SK-N-SH (cell line): ENCODE measurements at regions of chr18 and their contacts with region 1.

Region 1: GRCh38 chr18:58781627-58782194 is 83.0 kb upstream of the ZNF532 start:
- DNase-seq: peak; percentile 70
- H3K4me3 ChIP-seq: peak overlapping the region in 1 of 2 experiments; percentile 27; a peak in 1 of 4 replicates
- H3K27ac ChIP-seq: no peak overlapping the region
- H3K4me1 ChIP-seq: peaks cover 2 to 14% of the 10 kb centered on the region in 2 experiments; a peak in 2 of 4 replicates
- H3K27me3 ChIP-seq: no peaks in the 10 kb centered on the region
- CTCF ChIP-seq: peak; percentile 96
- EP300 ChIP-seq: no peak
- RAD21 ChIP-seq: peak; percentile 96

Region 2: DNA sequence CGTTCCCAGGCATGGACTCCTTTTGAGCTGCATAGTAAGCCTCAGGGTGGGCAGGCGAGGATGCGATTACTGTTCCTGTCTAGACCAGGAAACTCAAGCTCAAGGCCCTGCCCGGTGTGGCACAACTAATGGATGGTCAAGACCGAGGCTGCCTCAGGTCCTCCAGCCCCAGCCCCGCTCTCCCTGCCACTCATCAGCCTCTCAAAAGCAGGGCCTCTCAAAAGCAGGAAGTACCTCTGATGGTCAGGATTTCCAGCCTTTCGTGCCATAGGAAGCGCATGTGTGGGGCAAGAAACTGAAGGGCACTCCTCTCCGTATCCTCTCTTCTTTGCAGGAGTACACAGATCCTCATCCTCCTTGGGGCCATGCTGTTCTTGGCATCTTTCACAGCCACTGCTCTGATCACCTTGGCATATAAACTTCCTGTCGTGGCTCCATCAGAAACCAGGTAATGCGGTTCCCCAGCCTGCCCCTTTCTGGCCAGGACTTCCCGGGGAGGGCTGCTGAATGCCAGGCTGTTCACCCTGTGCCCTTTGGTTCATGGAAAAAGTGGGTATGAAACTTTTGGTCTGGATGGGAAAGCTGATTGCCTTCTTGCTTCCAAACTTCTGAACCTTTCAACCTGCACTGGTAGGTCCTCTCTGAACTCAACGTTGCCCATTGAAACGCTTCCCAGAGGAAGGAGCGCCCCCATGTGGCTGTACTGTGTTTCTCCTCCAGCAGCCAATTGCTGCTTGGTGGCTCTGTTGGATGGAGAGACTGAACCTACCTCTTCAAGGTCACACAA is 275.2 kb after region 1 on chr18:
- CTCF ChIA-PET with region 1: interaction called, 68 read pairs
- POLR2A ChIA-PET with region 1: no interaction called
- DNase-seq: peak; percentile 54
- H3K4me3 ChIP-seq: no peak overlapping the region
- H3K27ac ChIP-seq: no peak overlapping the region
- H3K4me1 ChIP-seq: peaks cover 0 to 13% of the 10 kb centered on the region in 2 experiments; a peak in 2 of 4 replicates
- H3K27me3 ChIP-seq: no peaks in the 10 kb centered on the region
- CTCF ChIP-seq: peak; percentile 87
- EP300 ChIP-seq: no peak
- RAD21 ChIP-seq: peak; percentile 90

Region 3: DNA sequence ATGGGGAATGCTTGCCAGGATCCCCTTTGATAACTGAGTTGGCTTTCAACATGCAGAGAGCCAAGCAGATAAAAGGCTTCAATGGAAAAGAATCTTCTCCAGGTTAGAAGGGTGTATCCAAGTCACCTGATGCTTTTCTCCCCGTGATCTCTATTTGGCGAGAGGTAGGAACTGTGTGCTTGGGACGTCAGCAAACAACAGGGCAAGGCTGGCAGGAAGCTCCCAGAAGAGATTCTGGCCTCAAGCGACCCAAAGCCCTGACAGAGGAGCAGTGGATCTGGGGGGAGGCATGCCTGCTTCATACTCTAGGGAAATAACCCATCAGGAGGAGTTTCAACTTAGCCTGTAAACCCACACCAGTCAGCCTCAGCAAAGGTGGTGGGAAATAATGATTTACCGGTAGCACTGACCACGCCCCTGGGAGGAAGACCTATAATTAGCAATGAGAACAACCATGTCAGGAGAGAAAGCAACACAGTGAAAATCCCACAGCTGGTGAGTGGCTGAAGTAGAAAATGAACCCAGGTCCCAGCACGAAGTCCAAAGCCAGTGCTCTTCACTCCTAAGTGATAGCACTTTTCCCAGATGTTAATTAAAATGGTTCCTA is 281.7 kb after region 1 on chr18:
- CTCF ChIA-PET with region 1: interaction called, 68 read pairs
- POLR2A ChIA-PET with region 1: no interaction called
- DNase-seq: no peak
- H3K4me3 ChIP-seq: no peak overlapping the region
- H3K27ac ChIP-seq: no peak overlapping the region
- H3K4me1 ChIP-seq: no peaks in the 10 kb centered on the region; a peak in 1 of 4 replicates
- H3K27me3 ChIP-seq: no peaks in the 10 kb centered on the region
- CTCF ChIP-seq: no peak
- EP300 ChIP-seq: no peak
- RAD21 ChIP-seq: no peak

Region 4: DNA sequence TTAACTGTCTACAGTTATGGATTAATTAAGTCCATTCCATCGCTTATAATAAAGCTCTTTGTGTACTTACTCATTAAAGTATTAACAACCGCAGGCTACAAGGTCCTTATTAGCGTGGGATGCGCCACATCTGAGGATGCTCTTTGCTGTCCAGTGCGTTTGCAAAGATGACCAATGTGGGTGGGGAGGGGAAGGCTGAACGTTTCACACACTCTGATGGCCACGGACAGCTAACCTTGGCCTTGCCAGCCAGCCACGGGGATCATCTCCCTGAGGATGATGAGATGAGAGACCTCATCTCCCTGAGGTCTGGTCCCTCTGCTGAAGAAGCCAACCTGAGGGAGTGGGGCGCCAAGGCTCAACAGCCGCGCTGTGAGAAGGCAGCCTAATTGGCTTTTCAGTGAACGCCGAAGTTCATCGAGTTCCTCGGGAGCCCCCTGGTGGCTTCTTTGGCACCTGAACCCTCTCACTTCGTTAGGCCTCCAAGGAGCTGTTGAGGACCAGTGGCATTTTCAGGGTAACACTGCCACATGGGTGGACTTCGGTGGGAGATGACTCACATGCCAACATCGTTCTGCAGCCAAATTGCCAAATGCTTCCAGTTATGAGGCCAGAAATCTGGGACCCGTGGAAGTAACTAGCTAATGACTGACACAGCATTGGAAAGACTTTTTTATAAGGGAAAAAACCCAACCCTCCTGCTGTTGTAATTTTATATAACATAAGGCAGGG is 288.6 kb after region 1 on chr18:
- CTCF ChIA-PET with region 1: interaction called, 66 read pairs
- POLR2A ChIA-PET with region 1: no interaction called
- DNase-seq: peak; percentile 75
- H3K4me3 ChIP-seq: peak overlapping the region in 1 of 2 experiments; percentile 17; a peak in 1 of 4 replicates
- H3K27ac ChIP-seq: no peak overlapping the region
- H3K4me1 ChIP-seq: peaks cover 0 to 2% of the 10 kb centered on the region in 2 experiments; a peak in 1 of 4 replicates
- H3K27me3 ChIP-seq: no peaks in the 10 kb centered on the region
- CTCF ChIP-seq: peak; percentile 89
- EP300 ChIP-seq: no peak
- RAD21 ChIP-seq: peak; percentile 87